Caki2 (cell line): ENCODE measurements at regions of chr15 and their contacts with region 1.

Region 1: DNA sequence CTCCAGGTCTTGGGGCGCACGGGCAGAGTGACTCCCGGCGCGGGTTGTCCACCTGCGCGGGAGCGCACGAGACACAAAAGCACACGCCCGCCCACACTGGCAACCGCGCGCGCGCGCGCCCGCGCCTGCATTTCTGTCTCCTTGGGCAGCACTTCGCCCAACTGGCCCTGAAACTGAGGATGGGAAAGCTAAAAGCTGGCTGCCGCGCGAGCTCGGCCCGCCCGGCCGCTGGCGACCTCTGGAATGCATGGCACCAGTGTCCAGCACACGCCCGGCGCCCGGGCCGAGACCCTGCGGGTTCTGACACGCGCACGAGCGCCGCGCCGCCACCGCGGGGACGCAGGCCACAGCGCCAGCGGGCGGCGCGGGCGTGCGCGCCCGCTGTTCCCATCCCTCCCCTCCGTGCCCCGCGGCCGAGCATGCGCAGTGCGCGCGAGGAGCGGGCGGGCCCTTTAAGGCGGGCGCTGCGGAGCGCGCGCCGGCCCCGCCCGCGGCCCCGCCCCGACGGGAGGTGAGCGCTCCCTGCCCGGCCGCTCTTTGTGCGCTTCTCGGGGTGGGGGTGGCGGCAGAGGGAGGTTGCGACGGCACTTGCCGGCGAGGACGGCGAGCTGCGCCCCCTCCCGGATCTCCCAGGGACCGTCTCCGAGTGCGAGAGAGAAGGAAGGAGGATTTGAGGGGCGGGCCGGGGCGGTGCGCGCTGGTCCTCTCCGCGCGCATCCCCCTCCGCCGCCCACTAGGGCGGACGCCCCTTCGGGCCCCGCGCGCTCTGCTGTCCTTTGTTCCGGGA is 1.0 kb upstream of the MEX3B start:
- DNase-seq: peak; percentile 96

Region 2: DNA sequence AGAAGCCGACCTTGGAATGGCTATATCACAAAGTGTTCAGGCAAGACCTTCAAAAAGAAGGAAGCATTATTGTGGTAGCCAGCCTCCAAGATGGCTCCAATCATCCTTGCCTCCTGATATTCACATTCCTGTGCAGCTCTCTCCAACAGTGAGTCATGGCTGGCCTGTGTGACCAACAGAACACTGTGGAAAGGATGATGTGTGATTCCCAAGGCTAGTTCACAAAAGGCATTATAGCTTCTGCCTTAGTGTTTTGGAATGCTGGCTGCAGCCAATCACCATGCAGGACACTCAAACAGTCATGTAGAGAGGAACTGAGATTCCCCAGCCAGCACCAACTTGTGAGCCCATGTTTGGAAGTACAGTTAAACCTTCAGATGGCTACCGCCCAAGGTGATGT is 113.1 kb after region 1 on chr15:
- in situ Hi-C with region 1: loop called (anchors 10 kb)
- DNase-seq: no peak